ENCODE measurements at regions of chr5 and their contacts with region 1.

Region 1: GRCh38 chr5:88680253-88681132 is 202.5 kb downstream of the MEF2C start:
- DNase-seq: peak; percentile 94
- H3K4me3 ChIP-seq: peak overlapping the region; percentile 24 to 52
- H3K27ac ChIP-seq: no peak overlapping the region
- H3K4me1 ChIP-seq: peaks cover 6 to 10% of the 10 kb centered on the region in 2 experiments; a peak in 1 of 4 replicates
- H3K27me3 ChIP-seq: peaks cover 93% of the 10 kb centered on the region
- CTCF ChIP-seq: peak; percentile 90
- EP300 ChIP-seq: no peak
- RAD21 ChIP-seq: peak; percentile 73

Region 2: DNA sequence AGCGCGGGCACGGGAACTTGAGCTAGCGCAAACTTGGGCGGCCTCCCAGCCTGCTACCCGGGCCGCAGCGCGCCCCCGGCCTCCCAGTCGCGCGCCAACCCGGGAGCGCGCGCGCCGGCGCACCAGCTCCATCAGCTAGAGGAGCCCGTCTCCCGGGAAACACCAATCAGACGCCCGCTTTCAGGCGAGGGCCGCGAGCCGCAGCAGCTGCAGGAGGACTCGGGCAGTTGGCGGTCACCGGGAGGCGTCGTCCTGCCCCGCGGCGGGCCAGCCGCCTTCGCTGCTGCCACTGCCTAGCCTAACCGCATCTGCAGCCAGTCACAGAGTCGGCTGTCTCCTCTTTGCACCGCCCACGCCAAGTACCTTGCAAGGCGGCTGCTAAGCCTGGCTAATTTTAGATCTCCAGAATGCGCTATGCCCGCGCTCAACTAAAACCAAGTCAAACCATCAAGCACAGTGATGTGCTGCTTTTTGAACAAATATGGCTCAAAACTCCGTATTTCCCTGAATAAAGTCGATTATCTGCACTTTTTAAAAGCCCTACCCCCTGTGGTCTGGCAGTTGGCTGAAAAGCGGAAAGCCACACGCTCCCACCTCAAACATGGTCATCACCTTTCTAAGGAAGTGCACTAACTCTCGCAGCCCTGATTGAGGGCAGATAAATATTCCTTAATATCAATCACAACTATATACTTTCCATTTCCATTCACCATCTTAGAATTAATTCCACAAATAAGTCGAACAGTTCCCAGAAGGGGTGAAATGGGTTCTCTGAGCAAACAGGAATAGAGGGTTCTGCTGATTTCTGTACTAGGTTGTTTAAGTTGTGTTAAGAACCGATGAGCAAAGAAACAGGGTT is 19.3 kb before region 1 on chr5:
- CTCF ChIA-PET with region 1: interaction called, 10 read pairs
- POLR2A ChIA-PET with region 1: no interaction called
- DNase-seq: peak; percentile 98
- H3K4me3 ChIP-seq: peak overlapping the region; percentile 48 to 64
- H3K27ac ChIP-seq: no peak overlapping the region
- H3K4me1 ChIP-seq: peaks cover 0 to 7% of the 10 kb centered on the region in 2 experiments; a peak in 1 of 4 replicates
- H3K27me3 ChIP-seq: peaks cover 45% of the 10 kb centered on the region
- CTCF ChIP-seq: no peak
- EP300 ChIP-seq: no peak
- RAD21 ChIP-seq: no peak